ENCODE measurements at regions of chr1 and their contacts with region 1.

Region 1: DNA sequence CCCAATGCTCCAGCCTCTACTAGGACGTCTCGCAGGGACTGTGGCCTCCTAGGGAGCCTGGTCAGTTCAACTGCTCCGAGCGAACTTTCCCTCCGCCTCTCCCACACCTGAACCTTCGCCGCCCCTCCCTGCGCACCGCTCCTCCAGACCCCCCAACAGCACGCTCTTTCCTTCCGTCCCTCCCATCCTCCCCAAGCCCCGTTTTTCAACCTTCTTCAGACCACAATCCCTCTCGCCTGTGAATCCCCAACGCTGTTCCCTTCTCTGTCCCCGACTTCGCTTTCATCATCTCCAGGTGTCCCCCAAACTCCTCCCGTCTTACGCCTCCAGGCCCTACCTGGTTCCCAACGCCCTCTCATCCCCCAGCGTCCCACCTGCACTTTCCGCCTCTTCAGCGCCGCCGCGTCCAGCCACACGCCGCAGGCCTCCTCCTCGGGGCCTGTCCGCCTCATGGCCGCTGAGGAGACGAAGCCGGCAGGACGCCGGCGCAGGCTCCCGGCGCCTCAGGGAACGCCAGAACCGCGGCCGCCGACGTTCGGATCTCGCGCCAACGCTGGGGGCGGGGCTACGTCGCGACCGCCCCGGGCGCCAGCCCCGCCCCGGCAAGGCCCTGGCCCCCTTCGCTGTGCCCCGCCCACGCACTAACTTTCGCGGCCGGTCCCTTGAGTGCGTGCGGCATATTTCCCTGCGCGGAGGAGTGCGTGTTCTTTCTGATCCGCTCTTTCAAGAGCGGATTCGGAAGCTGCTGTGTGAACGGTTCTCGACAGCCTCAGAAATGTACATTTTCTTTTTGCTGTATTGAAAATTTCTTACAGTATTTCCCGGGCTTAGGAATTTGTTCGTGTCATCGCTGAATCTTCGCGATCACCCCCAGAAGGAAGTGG is at the start of gene AUNIP:
- DNase-seq: peak; percentile 85
- H3K4me3 ChIP-seq: peak within 1 kb of the TSS; percentile 55 to 64 (median 61)
- H3K27ac ChIP-seq: peak within 1 kb of the TSS; percentile 51
- H3K4me1 ChIP-seq: peaks cover 21% of the 10 kb centered on the region
- H3K27me3 ChIP-seq: no peaks in the 10 kb centered on the region
- CTCF ChIP-seq: no peak
- POLR2A ChIP-seq: peak; percentile 78
- total RNA-seq, gene AUNIP: 4.5 and 4.8 TPM in 2 replicates

Region 2: GRCh38 chr1:25819576-25820246 is 39.4 kb before region 1 on chr1 and contains the start of gene MTFR1L:
- CTCF ChIA-PET with region 1: no interaction called
- POLR2A ChIA-PET with region 1: no interaction called
- dilution Hi-C with region 1: no loop called
- intact Hi-C with region 1: loop called (anchors 1 kb)
- DNase-seq: peak; percentile 77
- H3K4me3 ChIP-seq: peak within 1 kb of the TSS; percentile 74 to 80 (median 77)
- H3K27ac ChIP-seq: peak within 1 kb of the TSS; percentile 47
- H3K4me1 ChIP-seq: peaks cover 14% of the 10 kb centered on the region
- H3K27me3 ChIP-seq: no peaks in the 10 kb centered on the region
- CTCF ChIP-seq: no peak
- POLR2A ChIP-seq: peak; percentile 65
- total RNA-seq, gene MTFR1L: 33.8 and 34.8 TPM in 2 replicates

Region 3: DNA sequence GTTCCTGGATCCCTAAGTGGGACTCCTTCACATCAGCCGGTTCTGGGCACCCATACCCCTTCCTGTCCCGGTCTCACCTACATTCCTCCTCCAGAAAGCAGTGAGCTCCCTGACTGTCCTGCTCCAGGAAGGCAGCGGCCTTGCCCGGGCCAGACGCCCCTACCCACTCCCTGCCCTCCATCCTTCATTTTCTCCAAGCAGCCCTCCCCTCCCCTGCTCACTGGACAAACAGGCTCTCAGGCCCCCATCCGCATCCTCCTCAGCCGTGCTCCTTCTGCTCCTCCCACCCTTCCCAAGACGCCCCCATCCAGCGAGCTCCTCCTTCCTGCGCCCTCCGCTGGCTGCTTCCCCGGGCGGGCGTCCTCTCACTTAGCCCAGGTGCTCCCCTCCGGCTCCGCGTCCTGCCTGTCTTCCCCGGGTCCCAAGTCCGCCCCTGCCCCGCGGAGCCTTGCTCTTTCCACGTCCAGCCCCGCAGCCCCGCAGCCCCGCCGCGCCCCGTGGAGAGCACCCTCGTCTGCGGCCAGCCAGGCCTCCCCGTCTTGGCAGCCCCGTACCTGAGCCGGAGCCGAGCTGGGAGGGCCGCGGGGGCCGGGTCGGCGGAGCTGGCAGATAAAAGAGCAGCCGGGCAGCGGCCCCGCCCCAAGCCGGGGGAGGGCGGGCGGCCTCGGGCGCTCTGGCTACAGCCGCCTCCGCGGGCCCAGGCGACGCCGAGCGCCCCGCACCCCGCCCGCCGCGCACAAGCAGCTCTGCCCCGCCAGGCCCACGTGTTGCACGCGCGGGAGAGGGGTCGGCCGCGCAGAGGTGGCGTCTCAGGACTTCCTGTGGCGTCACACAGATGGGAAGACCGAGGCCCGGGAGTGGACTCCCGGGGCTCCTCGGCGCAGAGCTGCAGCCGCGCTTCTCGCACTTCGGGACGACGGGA is 16.0 kb after region 1 on chr1 and contains the start of gene PAQR7:
- CTCF ChIA-PET with region 1: interaction called, 3 read pairs
- POLR2A ChIA-PET with region 1: interaction called, 3 read pairs
- dilution Hi-C with region 1: no loop called
- intact Hi-C with region 1: loop called (anchors 1 kb)
- DNase-seq: peak; percentile 70
- H3K4me3 ChIP-seq: peak within 1 kb of the TSS; percentile 33 to 54 (median 43)
- H3K27ac ChIP-seq: no peak within 1 kb of the TSS
- H3K4me1 ChIP-seq: peaks cover 10% of the 10 kb centered on the region
- H3K27me3 ChIP-seq: no peaks in the 10 kb centered on the region
- CTCF ChIP-seq: peak in 1 of 2 donors; percentile 6
- POLR2A ChIP-seq: no peak
- total RNA-seq, gene PAQR7: 8.4 and 9.1 TPM in 2 replicates

Region 4: GRCh38 chr1:25989440-25990234 is 130.5 kb after region 1 on chr1:
- CTCF ChIA-PET with region 1: no interaction called
- POLR2A ChIA-PET with region 1: no interaction called
- dilution Hi-C with region 1: no loop called
- intact Hi-C with region 1: no loop called
- DNase-seq: no peak
- H3K4me3 ChIP-seq: no peak overlapping the region
- H3K27ac ChIP-seq: no peak overlapping the region
- H3K4me1 ChIP-seq: no peaks in the 10 kb centered on the region
- H3K27me3 ChIP-seq: no peaks in the 10 kb centered on the region
- CTCF ChIP-seq: no peak
- POLR2A ChIP-seq: no peak